ENCODE measurements at regions of chr6 and their contacts with region 1.

Region 1: DNA sequence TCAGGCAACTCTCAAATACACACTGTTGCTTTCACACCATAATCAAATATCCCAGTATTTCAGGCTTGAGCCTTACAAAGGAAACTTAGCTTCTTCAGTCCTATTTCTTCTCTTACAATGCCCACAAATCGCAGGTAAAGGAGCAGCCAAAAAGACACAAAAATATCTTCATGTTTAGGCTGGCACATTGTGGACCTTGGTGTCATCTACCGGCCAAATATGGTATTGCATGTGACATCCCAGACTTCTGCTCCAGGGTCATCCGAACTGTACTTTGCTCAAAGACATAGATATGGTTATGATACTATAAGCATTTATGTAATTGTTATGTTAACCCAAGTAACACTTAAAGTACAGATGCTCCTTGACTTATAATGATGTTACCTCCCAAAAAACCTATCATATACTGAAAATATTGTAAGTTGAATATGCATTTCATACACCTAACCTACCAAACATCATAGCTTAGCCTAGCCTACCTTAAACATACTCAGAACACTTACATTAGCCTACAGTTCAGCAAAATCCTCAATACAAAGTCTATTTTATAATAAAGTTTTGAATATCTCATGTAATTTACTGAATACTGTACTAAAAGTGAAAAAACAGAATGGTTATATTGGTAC is 4.6 kb downstream of the OR2H2 start:
- DNase-seq: peak in 2 of 10 donors; percentile 43 to 62

Region 2: DNA sequence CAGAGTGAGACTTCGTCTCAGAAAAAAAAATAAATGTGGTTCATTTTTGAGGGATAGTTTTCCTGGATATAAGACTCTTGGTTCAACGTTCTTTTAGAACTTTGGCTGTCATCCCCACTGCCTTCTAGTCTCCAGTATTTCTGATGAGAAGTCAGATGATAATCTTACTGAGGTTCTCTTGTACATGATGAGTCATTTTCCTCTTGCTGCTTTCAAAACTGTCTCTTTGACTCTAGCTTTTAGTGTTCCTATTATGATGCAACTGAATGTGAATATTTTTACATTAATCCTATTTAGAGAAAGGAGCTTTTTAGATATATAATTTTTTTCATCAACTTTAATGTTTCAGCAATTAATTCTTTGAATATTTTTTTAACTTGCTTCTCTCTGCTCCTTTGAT is 334.0 kb before region 1 on chr6:
- intact Hi-C with region 1: no loop called
- DNase-seq: no peak

Region 3: GRCh38 chr6:29376003-29376402 is 213.5 kb before region 1 on chr6:
- intact Hi-C with region 1: loop called (anchors 10 kb)
- DNase-seq: no peak

Measured in posterior cingulate gyrus (tissue), 11 donors.